ENCODE measurements at regions of chr1 and their contacts with region 1.

Region 1: GRCh38 chr1:185681034-185681633 is 53.1 kb upstream of the HMCN1 start:
- DNase-seq: peak; percentile 45
- ATAC-seq: peak; percentile 85
- H3K4me3 ChIP-seq: no peak overlapping the region
- H3K27ac ChIP-seq: no peak overlapping the region
- H3K4me1 ChIP-seq: no peaks in the 10 kb centered on the region
- H3K27me3 ChIP-seq: no peaks in the 10 kb centered on the region
- CTCF ChIP-seq: peak; percentile 52 to 54 (median 53); a peak in 5 of 6 replicates
- POLR2A ChIP-seq: no peak
- RAD21 ChIP-seq: peak; percentile 79

Region 2: GRCh38 chr1:185317034-185317885 is 363.9 kb before region 1 on chr1 and contains the start of gene IVNS1ABP:
- CTCF ChIA-PET with region 1: interaction called, 10 read pairs
- POLR2A ChIA-PET with region 1: interaction called, 3 read pairs
- RAD21 ChIA-PET with region 1: no interaction called
- intact Hi-C with region 1: loop called (anchors 5 kb)
- DNase-seq: peak; percentile 85
- ATAC-seq: peak; percentile 82
- H3K4me3 ChIP-seq: peak within 1 kb of the TSS; percentile 81 to 88
- H3K27ac ChIP-seq: peak within 1 kb of the TSS; percentile 92
- H3K4me1 ChIP-seq: peaks cover 8 to 27% of the 10 kb centered on the region in 2 experiments; a peak in 3 of 4 replicates
- H3K27me3 ChIP-seq: no peaks in the 10 kb centered on the region
- CTCF ChIP-seq: peak; percentile 13 to 24 (median 20); a peak in 2 of 6 replicates
- POLR2A ChIP-seq: peak; percentile 64
- RAD21 ChIP-seq: peak; percentile 67
- total RNA-seq, gene IVNS1ABP: 57.9 TPM

Region 3: DNA sequence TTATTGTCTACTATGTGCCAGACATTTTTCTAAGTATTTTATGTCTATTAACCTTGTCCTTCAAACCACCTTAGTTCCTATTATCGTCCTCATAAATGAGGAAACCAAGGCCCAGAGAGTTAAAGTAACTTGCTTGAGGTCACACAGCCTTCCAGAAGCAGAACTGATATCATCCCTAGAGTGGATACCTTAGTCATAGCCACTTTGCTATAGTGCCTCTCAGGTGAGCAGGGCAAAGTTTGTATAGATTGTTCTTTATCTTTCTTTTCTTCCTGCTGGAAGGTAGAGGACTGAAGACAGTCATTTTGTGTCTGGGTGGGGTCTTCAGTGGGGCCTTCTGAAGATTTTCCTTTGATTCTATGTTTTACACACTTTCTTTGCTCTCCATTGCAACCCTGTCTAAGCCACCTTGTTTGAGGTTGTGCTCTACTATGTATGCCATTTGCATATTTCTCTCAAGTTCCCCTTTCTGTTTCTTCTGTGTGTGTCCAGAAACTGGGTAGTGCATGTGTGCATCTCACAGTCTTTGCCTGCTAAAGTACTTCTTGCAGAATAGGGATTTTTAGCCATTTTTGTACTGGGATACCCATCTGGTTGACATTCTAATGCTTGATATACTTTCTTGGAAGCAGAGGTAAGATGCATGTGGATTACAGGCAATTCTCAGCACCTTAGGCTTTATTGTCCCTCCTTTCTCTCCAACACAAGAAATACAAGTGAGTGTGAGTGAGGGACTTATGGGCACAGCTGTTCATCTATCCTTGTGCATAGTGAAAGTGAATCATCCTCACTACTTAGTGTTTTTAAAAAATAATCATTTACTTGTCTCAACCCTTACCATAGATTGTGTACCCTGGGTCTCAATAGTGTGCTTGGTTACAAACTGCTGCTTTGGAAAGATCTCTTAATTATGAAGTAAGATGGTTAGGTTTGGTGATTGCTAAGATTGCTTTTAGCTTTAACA is 154.5 kb before region 1 on chr1:
- CTCF ChIA-PET with region 1: no interaction called
- POLR2A ChIA-PET with region 1: no interaction called
- RAD21 ChIA-PET with region 1: no interaction called
- intact Hi-C with region 1: no loop called
- DNase-seq: no peak
- ATAC-seq: no peak
- H3K4me3 ChIP-seq: no peak overlapping the region
- H3K27ac ChIP-seq: no peak overlapping the region
- H3K4me1 ChIP-seq: no peaks in the 10 kb centered on the region
- H3K27me3 ChIP-seq: no peaks in the 10 kb centered on the region
- CTCF ChIP-seq: no peak
- POLR2A ChIP-seq: no peak
- RAD21 ChIP-seq: no peak

Region 4: DNA sequence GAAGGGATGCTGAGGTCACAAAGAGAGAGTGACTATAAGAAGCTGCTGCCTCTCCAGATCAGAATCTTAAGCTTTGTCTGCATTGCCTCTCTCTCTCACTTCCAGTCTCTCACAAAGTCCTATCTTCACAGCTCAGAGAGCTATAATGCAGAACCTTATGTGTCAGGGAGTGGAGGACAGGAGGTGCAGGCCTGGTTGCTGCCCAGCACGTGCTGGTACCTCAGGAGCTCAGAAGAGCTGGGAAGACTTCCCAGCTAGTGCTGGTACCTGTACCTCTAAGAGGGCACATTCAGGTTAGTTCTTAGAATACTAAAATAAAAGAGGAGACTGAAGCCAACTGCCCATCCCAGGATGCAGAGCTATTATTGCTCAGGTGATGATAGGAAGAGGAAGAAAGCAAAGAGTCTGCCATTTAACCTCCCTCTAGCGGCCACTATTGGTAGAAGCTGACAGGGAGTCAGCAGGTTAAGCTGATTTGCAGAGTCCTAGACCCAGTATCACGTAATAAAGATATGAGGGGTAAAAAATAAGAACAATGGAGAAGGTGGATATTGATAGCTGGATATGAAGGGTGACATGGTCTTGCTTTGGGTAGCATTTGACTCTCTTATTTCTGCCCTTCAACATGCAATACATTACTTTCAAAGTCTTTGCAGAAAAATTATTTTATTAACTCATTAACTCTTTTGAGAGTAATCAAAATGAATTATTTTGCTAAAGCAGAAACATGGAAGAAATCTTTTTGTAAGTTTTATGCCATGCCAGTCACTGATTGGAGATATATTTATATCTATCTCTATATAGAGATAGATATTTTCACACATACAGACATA is 85.1 kb before region 1 on chr1:
- CTCF ChIA-PET with region 1: interaction called, 12 read pairs
- POLR2A ChIA-PET with region 1: no interaction called
- RAD21 ChIA-PET with region 1: no interaction called
- intact Hi-C with region 1: no loop called
- DNase-seq: peak; percentile 51
- ATAC-seq: peak; percentile 98
- H3K4me3 ChIP-seq: no peak overlapping the region
- H3K27ac ChIP-seq: no peak overlapping the region
- H3K4me1 ChIP-seq: no peaks in the 10 kb centered on the region
- H3K27me3 ChIP-seq: no peaks in the 10 kb centered on the region
- CTCF ChIP-seq: peak; percentile 45 to 88 (median 86); a peak in 5 of 6 replicates
- POLR2A ChIP-seq: no peak
- RAD21 ChIP-seq: peak; percentile 62

Region 5: GRCh38 chr1:186129758-186130157 is 448.6 kb after region 1 on chr1:
- CTCF ChIA-PET with region 1: no interaction called
- POLR2A ChIA-PET with region 1: no interaction called
- RAD21 ChIA-PET with region 1: no interaction called
- intact Hi-C with region 1: no loop called
- DNase-seq: no peak
- ATAC-seq: no peak
- H3K4me3 ChIP-seq: no peak overlapping the region
- H3K27ac ChIP-seq: no peak overlapping the region
- H3K4me1 ChIP-seq: no peaks in the 10 kb centered on the region
- H3K27me3 ChIP-seq: no peaks in the 10 kb centered on the region
- CTCF ChIP-seq: no peak
- POLR2A ChIP-seq: no peak
- RAD21 ChIP-seq: no peak